ENCODE measurements at regions of chr11 and their contacts with region 1.

Region 1: GRCh38 chr11:7513234-7514098 is at the start of gene PPFIBP2:
- DNase-seq: no peak
- ATAC-seq: peak; percentile 80
- H3K4me3 ChIP-seq: peak within 1 kb of the TSS; percentile 92
- H3K27ac ChIP-seq: peak within 1 kb of the TSS; percentile 99
- H3K4me1 ChIP-seq: peaks cover 22% of the 10 kb centered on the region
- H3K27me3 ChIP-seq: no peaks in the 10 kb centered on the region
- CTCF ChIP-seq: peak; percentile 73 to 91 (median 81)
- EP300 ChIP-seq: peak; percentile 19 to 30; a peak in 3 of 4 replicates
- POLR2A ChIP-seq: peak; percentile 84
- RAD21 ChIP-seq: peak; percentile 90
- polyA plus RNA-seq, gene PPFIBP2: 17.3 to 22.3 TPM

Region 2: DNA sequence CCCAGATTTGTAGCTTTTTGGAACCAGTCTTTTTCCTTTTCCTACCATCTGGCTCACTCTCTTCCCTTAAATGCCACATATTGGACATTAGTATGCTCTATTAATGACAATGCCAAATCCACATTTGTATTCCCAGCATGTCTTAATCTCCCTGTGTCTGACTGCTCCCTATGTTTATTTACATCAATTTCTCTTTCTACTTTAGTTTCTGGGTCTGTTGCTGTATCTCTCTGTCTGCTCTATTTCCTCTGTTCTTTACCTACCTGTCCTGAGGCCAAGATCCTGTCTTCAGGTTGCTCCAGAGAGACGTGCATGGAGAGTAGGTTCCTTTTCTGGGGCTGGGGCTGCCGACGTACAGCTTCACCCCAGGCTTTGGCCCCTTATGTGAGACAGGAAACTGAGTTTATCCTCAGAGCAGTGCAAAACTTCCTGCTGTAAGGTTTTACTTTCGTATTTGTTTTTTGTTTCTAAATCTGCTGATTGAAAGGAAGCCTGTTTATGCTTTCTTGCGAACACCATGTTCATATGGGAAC is 767.3 kb before region 1 on chr11:
- CTCF ChIA-PET with region 1: interaction called, 3 read pairs
- POLR2A ChIA-PET with region 1: no interaction called
- RAD21 ChIA-PET with region 1: no interaction called
- SMC1A ChIA-PET with region 1: no interaction called
- in situ Hi-C with region 1: no loop called
- intact Hi-C with region 1: loop called (anchors 10 kb)
- DNase-seq: peak; percentile 68
- ATAC-seq: peak; percentile 83
- H3K4me3 ChIP-seq: peak overlapping the region; percentile 71
- H3K27ac ChIP-seq: peak overlapping the region; percentile 99
- H3K4me1 ChIP-seq: peaks cover 22% of the 10 kb centered on the region; the same call in 1 of the 2 replicates
- H3K27me3 ChIP-seq: no peaks in the 10 kb centered on the region
- CTCF ChIP-seq: no peak
- EP300 ChIP-seq: no peak
- POLR2A ChIP-seq: peak; percentile 83
- RAD21 ChIP-seq: no peak

Region 3: GRCh38 chr11:7449211-7449840 is 64.1 kb before region 1 on chr11:
- CTCF ChIA-PET with region 1: interaction called, 11 read pairs
- POLR2A ChIA-PET with region 1: no interaction called
- RAD21 ChIA-PET with region 1: interaction called, 7 read pairs
- SMC1A ChIA-PET with region 1: interaction called, 10 read pairs
- in situ Hi-C with region 1: no loop called
- intact Hi-C with region 1: no loop called
- DNase-seq: no peak
- ATAC-seq: peak; percentile 69
- H3K4me3 ChIP-seq: no peak overlapping the region
- H3K27ac ChIP-seq: no peak overlapping the region
- H3K4me1 ChIP-seq: no peaks in the 10 kb centered on the region
- H3K27me3 ChIP-seq: no peaks in the 10 kb centered on the region
- CTCF ChIP-seq: no peak
- EP300 ChIP-seq: no peak
- POLR2A ChIP-seq: no peak
- RAD21 ChIP-seq: no peak

Region 4: GRCh38 chr11:7495882-7496551 is 17.4 kb before region 1 on chr11:
- CTCF ChIA-PET with region 1: interaction called, 65 read pairs
- POLR2A ChIA-PET with region 1: interaction called, 24 read pairs
- RAD21 ChIA-PET with region 1: interaction called, 21 read pairs
- SMC1A ChIA-PET with region 1: interaction called, 54 read pairs
- in situ Hi-C with region 1: no loop called
- intact Hi-C with region 1: no loop called
- DNase-seq: peak; percentile 47
- ATAC-seq: peak; percentile 91
- H3K4me3 ChIP-seq: no peak overlapping the region
- H3K27ac ChIP-seq: peak overlapping the region; percentile 39
- H3K4me1 ChIP-seq: peaks cover 18% of the 10 kb centered on the region
- H3K27me3 ChIP-seq: no peaks in the 10 kb centered on the region
- CTCF ChIP-seq: no peak
- EP300 ChIP-seq: 0 out of 4 replicates have a peak, but pooled peaks of 1 of the 2 experiments have one; percentile 38
- POLR2A ChIP-seq: no peak
- RAD21 ChIP-seq: no peak

Region 5: GRCh38 chr11:7536100-7536499 is 22.6 kb after region 1 on chr11:
- CTCF ChIA-PET with region 1: interaction called, 32 read pairs
- POLR2A ChIA-PET with region 1: interaction called, 8 read pairs
- RAD21 ChIA-PET with region 1: interaction called, 6 read pairs
- SMC1A ChIA-PET with region 1: interaction called, 11 read pairs
- in situ Hi-C with region 1: no loop called
- intact Hi-C with region 1: no loop called
- DNase-seq: no peak
- ATAC-seq: no peak
- H3K4me3 ChIP-seq: no peak overlapping the region
- H3K27ac ChIP-seq: no peak overlapping the region
- H3K4me1 ChIP-seq: peaks cover 73% of the 10 kb centered on the region
- H3K27me3 ChIP-seq: no peaks in the 10 kb centered on the region
- CTCF ChIP-seq: peak in 2 of 3 experiments; percentile 43 to 45; a peak in 3 of 6 replicates
- EP300 ChIP-seq: no peak
- POLR2A ChIP-seq: no peak
- RAD21 ChIP-seq: peak; percentile 11; the same call in 1 of the 2 replicates

Region 6: GRCh38 chr11:7571640-7572000 is 58.2 kb after region 1 on chr11:
- CTCF ChIA-PET with region 1: interaction called, 10 read pairs
- POLR2A ChIA-PET with region 1: no interaction called
- RAD21 ChIA-PET with region 1: interaction called, 8 read pairs
- SMC1A ChIA-PET with region 1: interaction called, 5 read pairs
- in situ Hi-C with region 1: no loop called
- intact Hi-C with region 1: no loop called
- DNase-seq: no peak
- ATAC-seq: peak; percentile 47
- H3K4me3 ChIP-seq: no peak overlapping the region
- H3K27ac ChIP-seq: no peak overlapping the region
- H3K4me1 ChIP-seq: peaks cover 11% of the 10 kb centered on the region
- H3K27me3 ChIP-seq: no peaks in the 10 kb centered on the region
- CTCF ChIP-seq: peak; percentile 58 to 74 (median 69)
- EP300 ChIP-seq: no peak
- POLR2A ChIP-seq: no peak
- RAD21 ChIP-seq: peak; percentile 60; the same call in 1 of the 2 replicates

Region 7: DNA sequence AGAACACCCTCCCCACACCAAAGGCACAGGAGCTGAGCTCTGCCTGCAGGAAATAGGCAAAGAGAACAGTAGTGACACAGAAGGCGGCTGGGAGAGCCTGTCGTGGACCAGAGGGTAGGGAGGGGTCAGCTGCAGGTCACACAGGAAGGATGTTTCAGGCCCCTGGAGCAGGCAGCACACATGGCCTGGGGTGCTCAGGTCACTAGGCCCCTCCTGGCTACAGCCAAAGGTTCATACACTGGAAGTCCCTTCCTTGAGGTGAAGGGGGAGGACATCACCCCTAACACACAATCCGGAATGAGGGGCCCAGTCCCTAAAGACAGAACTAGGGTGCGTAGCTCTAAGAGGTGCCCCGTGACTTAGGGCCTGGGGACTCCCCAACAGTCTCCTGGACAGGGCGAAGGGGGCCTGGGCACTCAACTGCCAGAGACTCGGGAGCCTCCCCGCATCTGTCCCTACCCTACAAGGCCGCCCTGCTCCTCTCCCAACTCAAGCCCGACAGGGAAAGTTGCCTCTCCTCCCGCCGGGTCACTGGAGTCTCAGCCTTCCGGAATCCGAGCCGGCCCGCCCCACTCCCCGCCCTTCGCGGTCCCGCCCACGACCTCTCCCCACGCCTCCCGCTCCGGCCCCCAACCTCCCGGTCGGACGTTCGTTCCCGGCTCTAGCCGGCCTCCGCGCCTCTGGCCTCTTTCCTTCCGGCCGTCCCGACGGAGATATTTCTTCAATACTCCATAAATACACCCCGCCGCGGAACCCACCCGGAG is 159.7 kb after region 1 on chr11 and contains the start of gene CYB5R2:
- CTCF ChIA-PET with region 1: interaction called, 61 read pairs
- POLR2A ChIA-PET with region 1: interaction called, 3 read pairs
- RAD21 ChIA-PET with region 1: interaction called, 5 read pairs
- SMC1A ChIA-PET with region 1: interaction called, 5 read pairs
- in situ Hi-C with region 1: no loop called
- intact Hi-C with region 1: loop called (anchors 2 kb)
- DNase-seq: no peak
- ATAC-seq: peak; percentile 61
- H3K4me3 ChIP-seq: peak within 1 kb of the TSS; percentile 70
- H3K27ac ChIP-seq: peak within 1 kb of the TSS; percentile 70
- H3K4me1 ChIP-seq: peaks cover 34% of the 10 kb centered on the region
- H3K27me3 ChIP-seq: no peaks in the 10 kb centered on the region
- CTCF ChIP-seq: no peak
- EP300 ChIP-seq: no peak
- POLR2A ChIP-seq: no peak; the same call in none of the 2 replicates
- RAD21 ChIP-seq: no peak
- polyA plus RNA-seq, gene CYB5R2: 83.1 to 111 TPM

Measured in GM12878 (cell line).